Testis (tissue), 5 donors: ENCODE measurements at regions of chr6 and their contacts with region 1.

Region 1: DNA sequence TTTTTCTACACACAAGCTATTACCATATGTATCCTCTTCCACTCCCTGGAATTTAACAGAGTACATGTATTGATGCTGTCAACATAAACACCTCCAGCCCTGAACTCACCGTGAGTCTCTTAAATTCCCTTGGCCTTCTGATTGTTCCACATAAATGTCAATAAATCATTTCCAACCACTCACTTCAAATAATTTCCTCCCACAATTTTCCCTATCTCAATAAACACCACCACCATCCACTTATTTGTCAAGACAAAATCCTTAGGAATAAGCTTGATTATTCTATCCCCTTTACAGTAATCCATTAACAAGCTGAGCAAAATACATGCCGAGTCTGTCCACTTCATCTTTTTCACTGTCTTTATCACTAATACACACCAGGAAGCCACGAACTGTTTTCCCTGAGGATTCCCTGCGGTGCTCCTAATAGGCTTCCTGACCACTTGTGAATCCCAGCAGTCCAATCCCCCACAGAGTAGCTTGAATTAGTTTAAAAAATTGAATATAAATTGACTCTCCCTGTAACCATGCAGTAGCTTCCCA is 19.2 kb downstream of the HLA-DRB1 start:
- DNase-seq: no peak
- H3K4me3 ChIP-seq: no peak overlapping the region
- H3K27ac ChIP-seq: no peak overlapping the region
- H3K4me1 ChIP-seq: no peaks in the 10 kb centered on the region
- H3K27me3 ChIP-seq: no peaks in the 10 kb centered on the region
- CTCF ChIP-seq: no peak
- POLR2A ChIP-seq: no peak

Region 2: DNA sequence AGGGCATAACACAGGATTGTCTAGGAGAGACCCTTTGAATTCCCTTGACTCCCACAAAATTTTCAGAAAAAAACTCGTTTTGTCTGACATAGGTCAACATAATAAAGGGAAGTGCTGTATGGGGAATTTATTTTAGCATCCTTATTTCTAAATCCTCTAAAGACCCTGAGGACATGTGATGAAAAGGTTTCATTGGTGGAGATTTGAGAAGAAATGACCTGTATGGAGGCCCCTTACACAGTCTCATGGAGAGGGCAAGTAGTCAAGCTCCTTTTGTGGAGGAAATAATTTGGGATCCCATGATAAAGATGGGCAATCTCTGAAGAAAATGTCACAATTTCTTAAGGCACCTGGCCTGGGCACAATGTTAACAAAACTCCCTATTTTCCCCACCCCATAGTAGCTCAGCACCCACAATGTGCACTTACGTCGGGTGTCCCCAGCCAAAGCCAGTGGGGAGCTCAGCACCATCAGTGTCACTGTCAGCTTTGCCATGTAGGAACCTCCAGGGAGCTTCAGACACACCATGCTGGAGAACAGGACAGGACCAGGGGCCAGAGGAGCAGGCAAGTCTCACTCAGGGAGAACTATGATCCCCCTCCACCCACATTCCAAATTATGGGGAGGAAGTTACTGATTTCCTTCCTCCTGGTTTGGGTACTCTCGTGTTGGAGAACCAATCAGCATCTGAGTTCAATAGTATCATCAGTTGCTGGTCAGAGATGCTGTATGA is 40.6 kb before region 1 on chr6 and contains the start of gene HLA-DRB5:
- intact Hi-C with region 1: loop called (anchors 5 kb)
- DNase-seq: peak; percentile 12
- H3K4me3 ChIP-seq: no peak within 1 kb of the TSS
- H3K27ac ChIP-seq: no peak within 1 kb of the TSS
- H3K4me1 ChIP-seq: no peaks in the 10 kb centered on the region
- H3K27me3 ChIP-seq: no peaks in the 10 kb centered on the region
- CTCF ChIP-seq: no peak
- POLR2A ChIP-seq: no peak
- total RNA-seq, gene HLA-DRB5: 0.39 to 0.56 TPM

Region 3: GRCh38 chr6:32658268-32658897 is 87.9 kb after region 1 on chr6:
- intact Hi-C with region 1: no loop called
- DNase-seq: no peak
- H3K4me3 ChIP-seq: no peak overlapping the region
- H3K27ac ChIP-seq: no peak overlapping the region
- H3K4me1 ChIP-seq: no peaks in the 10 kb centered on the region
- H3K27me3 ChIP-seq: no peaks in the 10 kb centered on the region
- CTCF ChIP-seq: no peak
- POLR2A ChIP-seq: no peak

Region 4: DNA sequence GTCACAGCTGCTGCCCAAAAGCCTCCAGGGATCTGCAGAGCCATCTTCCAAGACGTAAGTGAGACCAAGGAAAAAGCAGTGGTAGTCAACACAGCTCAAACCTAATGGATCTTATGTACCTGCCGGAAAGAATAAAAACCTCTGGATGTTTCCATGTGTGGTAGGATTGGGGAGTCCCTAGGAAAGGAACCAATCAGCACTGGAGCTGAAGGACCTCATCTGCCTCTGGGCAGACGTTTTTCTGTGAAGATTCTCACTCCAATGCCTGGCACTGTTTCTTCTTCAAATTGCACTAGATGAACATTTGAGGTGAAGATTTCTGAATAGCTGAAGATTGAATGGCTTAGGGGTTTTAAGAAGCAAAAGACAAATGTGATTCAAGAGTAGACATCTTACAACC is 193.0 kb after region 1 on chr6 and contains the start of gene HLA-DQB2:
- intact Hi-C with region 1: no loop called
- DNase-seq: no peak
- H3K4me3 ChIP-seq: no peak within 1 kb of the TSS
- H3K27ac ChIP-seq: no peak within 1 kb of the TSS
- H3K4me1 ChIP-seq: no peaks in the 10 kb centered on the region
- H3K27me3 ChIP-seq: no peaks in the 10 kb centered on the region
- CTCF ChIP-seq: no peak
- POLR2A ChIP-seq: no peak
- total RNA-seq, gene HLA-DQB2: 0.62 to 0.79 TPM